ENCODE measurements at regions of chr16 and their contacts with region 1.

Region 1: DNA sequence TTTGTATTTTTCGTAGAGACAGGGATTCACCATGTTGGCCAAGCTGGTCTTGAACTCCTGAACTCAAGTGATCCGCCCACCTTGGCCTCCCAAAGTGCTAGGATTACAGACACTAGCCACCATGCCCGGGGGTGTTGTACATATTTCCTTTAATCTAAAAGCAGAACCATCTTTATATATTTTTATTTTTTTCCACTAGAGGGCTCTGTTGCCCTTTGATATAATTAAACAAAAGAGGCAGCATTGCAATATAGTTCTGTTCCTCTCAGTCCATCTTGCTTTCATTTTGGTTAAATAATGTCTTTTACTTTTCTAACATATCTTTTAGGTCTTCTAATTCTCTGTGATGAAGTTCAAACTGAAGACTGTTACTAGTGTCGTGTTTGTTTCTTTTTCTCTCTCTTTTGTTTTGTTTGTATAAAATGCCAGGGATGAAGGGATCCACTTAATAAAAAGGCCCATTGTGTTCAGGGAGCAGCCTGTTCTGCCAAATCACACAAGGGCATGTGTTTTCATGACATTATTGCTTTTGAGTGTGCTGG is 23.4 kb downstream of the WWOX start:
- DNase-seq: no peak
- H3K4me3 Mint-ChIP-seq: no peak overlapping the region
- H3K27ac Mint-ChIP-seq: peak overlapping the region; percentile 75
- H3K4me1 Mint-ChIP-seq: peaks cover 2% of the 10 kb centered on the region
- H3K27me3 Mint-ChIP-seq: no peaks in the 10 kb centered on the region

Region 2: DNA sequence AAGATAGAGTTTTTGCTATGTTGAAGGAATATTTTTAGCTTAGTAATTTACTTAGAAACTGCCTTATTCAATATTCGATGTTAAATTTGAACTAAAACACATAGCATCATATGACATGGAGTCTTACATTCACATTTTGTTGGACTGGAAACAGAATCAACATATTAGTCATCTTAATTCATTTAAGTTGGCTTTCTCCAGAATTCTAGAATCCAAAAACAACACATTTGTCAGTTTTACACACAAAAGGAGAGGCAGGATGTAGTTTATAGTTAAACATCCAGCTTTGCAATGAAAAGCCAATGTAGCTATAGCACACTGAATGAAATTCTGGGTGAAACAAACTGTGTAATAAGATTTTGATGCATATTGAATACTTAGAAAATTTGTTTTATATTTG is 19.9 kb after region 1 on chr16:
- intact Hi-C with region 1: no loop called
- DNase-seq: no peak
- H3K4me3 Mint-ChIP-seq: no peak overlapping the region
- H3K27ac Mint-ChIP-seq: no peak overlapping the region
- H3K4me1 Mint-ChIP-seq: no peaks in the 10 kb centered on the region
- H3K27me3 Mint-ChIP-seq: no peaks in the 10 kb centered on the region

Region 3: DNA sequence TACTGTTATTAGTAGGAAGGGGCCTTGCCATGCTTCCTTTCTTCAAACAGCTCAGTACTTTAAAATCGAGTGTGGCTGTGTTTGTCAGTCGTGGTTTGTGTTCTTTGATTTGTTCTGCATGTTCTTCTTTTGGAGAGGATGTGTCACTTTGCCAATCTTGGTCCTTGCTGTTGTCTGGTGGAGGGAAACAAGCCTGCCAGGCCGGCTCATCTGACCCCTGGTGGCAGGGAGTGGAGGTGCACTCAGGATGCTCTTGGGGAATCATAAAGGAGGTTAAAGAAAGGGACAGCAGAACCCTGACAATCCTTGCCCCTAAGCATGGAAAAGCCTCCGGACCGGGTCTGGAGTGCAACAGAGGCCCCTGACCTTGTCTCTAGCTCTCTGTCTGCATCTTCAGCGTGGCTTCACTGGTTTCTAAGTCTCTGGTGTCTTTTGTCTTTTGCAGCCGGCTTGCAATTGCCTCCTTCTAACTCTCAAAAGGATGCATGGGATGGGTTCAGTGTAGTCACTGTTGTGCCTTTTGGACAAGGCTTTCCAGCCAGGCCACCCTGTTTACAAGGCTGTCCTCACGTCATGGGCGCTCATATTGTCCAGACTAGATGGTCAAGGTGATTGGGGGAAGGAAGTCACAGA is 112.4 kb after region 1 on chr16:
- intact Hi-C with region 1: loop called (anchors 1 kb)
- DNase-seq: peak; percentile 47
- H3K4me3 Mint-ChIP-seq: no peak overlapping the region
- H3K27ac Mint-ChIP-seq: no peak overlapping the region
- H3K4me1 Mint-ChIP-seq: no peaks in the 10 kb centered on the region
- H3K27me3 Mint-ChIP-seq: no peaks in the 10 kb centered on the region

Region 4: DNA sequence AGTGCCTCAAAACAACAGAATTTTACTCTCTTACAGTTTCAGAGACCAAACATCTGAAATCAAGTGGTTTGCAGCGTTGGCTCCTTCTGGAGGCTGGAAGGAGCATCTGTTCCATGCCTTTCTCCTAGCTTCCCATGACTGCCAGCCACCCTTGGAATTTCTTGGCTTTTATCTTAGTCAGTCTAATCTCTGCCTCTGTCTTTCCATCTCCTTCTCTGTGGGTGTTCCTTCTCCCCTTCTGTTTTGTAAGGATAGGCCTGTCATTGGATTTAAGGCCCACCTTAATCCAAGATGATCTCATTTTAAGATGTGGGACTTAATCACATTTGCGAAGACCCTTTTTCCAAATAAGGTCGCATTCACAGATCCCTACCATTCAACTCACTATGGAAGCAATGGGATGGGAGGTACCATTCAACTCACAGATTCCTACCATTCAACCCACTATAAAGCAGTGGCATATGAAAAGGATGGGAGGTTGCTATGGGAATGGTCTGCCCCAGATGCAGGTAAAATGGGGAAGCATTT is 298.4 kb after region 1 on chr16:
- intact Hi-C with region 1: no loop called
- DNase-seq: no peak
- H3K4me3 Mint-ChIP-seq: no peak overlapping the region
- H3K27ac Mint-ChIP-seq: no peak overlapping the region
- H3K4me1 Mint-ChIP-seq: no peaks in the 10 kb centered on the region
- H3K27me3 Mint-ChIP-seq: no peaks in the 10 kb centered on the region